ENCODE measurements at regions of chr18 and their contacts with region 1.

Region 1: DNA sequence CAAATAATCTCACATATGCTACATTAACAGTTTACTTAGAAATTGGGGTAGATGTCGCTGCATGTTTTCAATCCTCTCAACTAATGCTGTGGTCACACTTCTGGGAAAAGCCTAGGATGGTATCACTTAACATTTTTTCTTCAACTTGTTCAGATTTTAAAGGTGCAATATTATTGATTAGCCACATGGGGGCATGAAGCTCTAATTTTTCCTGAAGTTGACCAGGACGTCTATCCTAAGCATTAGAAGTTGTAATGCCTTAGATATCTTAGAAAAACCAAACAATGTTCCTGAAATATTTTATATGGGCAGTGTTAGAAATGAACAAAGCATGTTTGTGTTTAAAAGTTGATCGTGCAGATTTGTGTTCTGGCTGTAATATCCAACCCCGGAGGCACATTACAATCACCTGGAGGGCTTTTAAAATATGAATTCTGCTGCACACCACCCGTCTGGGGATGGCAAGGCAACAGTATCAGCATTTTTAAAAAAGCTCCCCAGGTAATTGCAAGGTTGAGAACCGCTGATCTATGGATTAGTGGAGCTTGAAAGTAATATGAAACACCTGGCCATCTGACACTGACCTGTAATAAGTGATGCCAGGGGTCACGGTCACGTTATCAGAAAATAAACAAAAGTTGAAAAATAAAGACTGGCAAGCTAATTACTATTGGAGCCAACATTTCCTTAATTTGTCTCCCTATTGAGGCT is 100.5 kb upstream of the LMAN1 start:
- DNase-seq: no peak
- ATAC-seq: peak; percentile 44 to 60
- H3K4me3 ChIP-seq: no peak overlapping the region
- H3K27ac ChIP-seq: no peak overlapping the region
- H3K4me1 ChIP-seq: peaks cover 2% of the 10 kb centered on the region
- H3K27me3 ChIP-seq: no peaks in the 10 kb centered on the region

Region 2: DNA sequence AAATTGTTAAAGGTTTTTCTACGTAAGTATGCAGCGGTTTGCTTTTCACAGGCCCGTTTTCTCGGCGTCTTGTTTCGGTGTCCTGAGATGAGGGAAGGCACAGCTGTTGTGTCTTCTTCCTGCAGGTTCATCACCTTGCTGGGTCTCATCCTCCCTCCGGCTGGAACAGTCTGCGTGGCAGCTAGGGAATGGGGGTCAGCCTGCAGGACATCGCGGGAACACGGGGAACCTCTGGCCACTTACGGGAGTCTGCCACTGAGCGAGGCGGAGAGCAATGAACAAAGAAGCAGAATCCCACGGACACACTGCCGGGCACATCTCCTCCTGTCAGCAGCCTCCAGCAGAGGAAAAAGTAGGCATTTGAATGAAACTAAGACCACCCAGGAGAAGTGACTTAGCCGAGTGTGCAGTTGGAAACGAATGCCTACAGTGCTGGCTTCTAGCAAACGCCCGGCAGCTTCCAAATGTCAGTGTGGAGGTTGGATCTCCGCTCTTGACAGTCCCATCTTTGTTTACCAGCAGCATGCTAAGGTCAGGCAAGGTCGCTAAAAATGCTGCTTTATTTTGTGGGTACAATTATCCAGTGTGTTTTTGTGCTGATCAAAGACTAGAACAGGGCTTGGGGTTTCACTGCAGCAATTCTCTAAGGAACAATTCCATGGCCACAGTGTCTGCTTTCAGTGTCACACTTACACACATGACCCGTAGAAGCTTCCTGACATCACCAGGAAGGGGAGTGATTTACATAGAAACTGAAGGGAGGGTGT is 429.7 kb before region 1 on chr18:
- intact Hi-C with region 1: no loop called
- DNase-seq: no peak
- ATAC-seq: peak in 1 of 2 donors; percentile 31
- H3K4me3 ChIP-seq: no peak overlapping the region
- H3K27ac ChIP-seq: no peak overlapping the region
- H3K4me1 ChIP-seq: peaks cover under 1% of the 10 kb centered on the region
- H3K27me3 ChIP-seq: no peaks in the 10 kb centered on the region

Region 3: GRCh38 chr18:59555995-59556659 is 96.6 kb after region 1 on chr18:
- intact Hi-C with region 1: loop called in 1 of 4 experiments (anchors 10 kb)
- DNase-seq: no peak
- ATAC-seq: no peak
- H3K4me3 ChIP-seq: no peak overlapping the region
- H3K27ac ChIP-seq: no peak overlapping the region
- H3K4me1 ChIP-seq: no peaks in the 10 kb centered on the region
- H3K27me3 ChIP-seq: no peaks in the 10 kb centered on the region

Region 4: GRCh38 chr18:59631583-59632181 is 172.2 kb after region 1 on chr18:
- intact Hi-C with region 1: loop called in 1 of 4 experiments (anchors 2 kb)
- DNase-seq: no peak
- ATAC-seq: no peak
- H3K4me3 ChIP-seq: no peak overlapping the region
- H3K27ac ChIP-seq: no peak overlapping the region
- H3K4me1 ChIP-seq: no peaks in the 10 kb centered on the region
- H3K27me3 ChIP-seq: no peaks in the 10 kb centered on the region

Region 5: DNA sequence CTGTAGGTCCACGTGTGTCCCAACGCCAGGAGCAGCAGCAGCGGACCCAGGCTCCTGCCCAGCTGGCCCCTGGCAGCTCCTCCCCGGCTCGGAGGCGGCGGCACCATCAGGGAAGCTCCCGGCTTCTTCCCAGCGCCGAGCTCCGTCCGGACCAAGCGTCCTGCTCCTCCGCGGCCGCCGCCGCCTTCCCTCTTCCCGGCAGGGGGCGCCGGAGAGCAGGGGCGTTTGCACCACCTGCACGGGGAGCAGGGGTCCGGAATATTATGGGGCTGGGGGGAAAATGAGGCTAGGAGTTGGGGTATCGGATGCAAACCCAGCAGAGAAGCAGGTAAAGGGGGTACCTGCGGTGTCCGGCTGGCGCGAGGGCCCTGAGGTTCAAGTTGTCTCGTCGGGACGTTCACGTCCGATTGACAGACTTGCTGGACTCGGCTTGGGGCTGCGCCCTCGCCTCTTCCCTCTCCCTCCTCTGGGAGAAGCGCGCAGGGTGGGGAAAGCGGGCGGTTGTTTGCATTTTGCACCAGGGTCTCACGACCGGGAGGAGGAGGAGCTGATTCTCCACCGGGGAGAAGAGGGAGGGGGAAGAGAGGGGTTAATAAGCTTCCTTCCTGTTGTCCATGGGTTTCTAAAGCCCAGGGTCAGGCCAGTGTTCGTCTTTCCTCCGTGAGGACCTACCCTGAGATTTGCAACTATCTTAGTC is 237.9 kb after region 1 on chr18 and contains the start of gene CCBE1:
- intact Hi-C with region 1: loop called in 1 of 4 experiments (anchors 10 kb)
- DNase-seq: peak; percentile 53 to 88 (median 88)
- ATAC-seq: peak; percentile 78 to 81
- H3K4me3 ChIP-seq: peak within 1 kb of the TSS; percentile 8
- H3K27ac ChIP-seq: no peak within 1 kb of the TSS
- H3K4me1 ChIP-seq: no peaks in the 10 kb centered on the region
- H3K27me3 ChIP-seq: no peaks in the 10 kb centered on the region
- total RNA-seq, gene CCBE1: 0.78 to 3.5 (median 1.9) TPM

Region 6: GRCh38 chr18:59823596-59824195 is 364.2 kb after region 1 on chr18:
- intact Hi-C with region 1: loop called in 3 of 4 experiments (anchors 1 to 5 kb)
- DNase-seq: peak; percentile 55 to 76 (median 57)
- ATAC-seq: peak; percentile 78 to 81
- H3K4me3 ChIP-seq: no peak overlapping the region
- H3K27ac ChIP-seq: no peak overlapping the region
- H3K4me1 ChIP-seq: no peaks in the 10 kb centered on the region
- H3K27me3 ChIP-seq: no peaks in the 10 kb centered on the region

Measured in right cardiac atrium (tissue), 5 donors.